Activated naive CD4-positive, alpha-beta T cell treated with anti-CD3 and anti-CD28 coated beads for 36 hours (primary cell): ENCODE measurements at regions of chr3 and their contacts with region 1.

Region 1: GRCh38 chr3:66822186-66823008 is 175.7 kb upstream of the KBTBD8 start:
- DNase-seq: peak; percentile 81
- H3K4me3 Mint-ChIP-seq: no peak overlapping the region
- H3K27ac Mint-ChIP-seq: no peak overlapping the region
- H3K4me1 Mint-ChIP-seq: no peaks in the 10 kb centered on the region
- H3K27me3 Mint-ChIP-seq: no peaks in the 10 kb centered on the region

Region 2: DNA sequence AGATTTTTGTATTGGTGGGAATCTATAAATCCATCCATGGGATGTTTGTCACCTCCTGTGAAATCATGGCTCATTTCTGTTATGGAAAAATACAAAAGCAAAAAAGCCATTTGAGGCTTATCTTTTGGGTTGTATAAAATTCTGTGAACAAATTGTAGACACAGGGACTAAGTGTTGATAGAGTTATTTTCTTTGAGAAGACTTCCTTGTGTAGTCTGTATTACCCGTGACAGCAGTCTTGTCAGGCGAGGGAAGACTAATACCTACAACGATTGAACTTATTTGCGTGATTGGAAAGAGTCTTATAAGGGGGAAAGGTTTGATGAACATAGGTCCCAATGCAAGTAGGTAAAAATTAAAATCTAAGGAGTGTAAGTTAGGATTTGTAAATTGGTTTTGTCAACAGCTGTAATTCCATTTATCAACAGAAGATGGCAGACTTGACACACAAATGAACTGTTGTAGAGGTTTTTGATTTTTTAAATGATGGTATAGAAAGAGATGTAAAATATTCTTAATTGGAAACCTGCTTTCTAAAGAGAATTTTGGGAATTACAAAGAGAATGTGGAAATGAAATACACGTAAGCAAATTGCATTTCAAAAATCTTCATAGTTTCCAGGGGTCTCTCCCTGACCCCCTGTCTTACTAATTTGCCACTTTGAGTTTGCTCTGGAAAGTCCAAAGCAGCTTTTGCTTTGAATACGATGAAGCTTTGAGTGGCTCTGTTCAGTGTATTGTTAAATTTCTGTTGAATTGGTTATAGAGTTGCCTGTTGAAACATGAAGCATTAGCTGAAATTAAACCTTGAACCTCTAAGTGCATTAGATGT is 568.4 kb before region 1 on chr3:
- CTCF ChIA-PET with region 1: interaction called, 14 read pairs
- intact Hi-C with region 1: loop called (anchors 1 kb)
- DNase-seq: no peak
- H3K4me3 Mint-ChIP-seq: no peak overlapping the region
- H3K27ac Mint-ChIP-seq: no peak overlapping the region
- H3K4me1 Mint-ChIP-seq: no peaks in the 10 kb centered on the region
- H3K27me3 Mint-ChIP-seq: no peaks in the 10 kb centered on the region

Region 3: GRCh38 chr3:66803206-66803605 is 19.2 kb before region 1 on chr3:
- CTCF ChIA-PET with region 1: interaction called, 16 read pairs
- intact Hi-C with region 1: no loop called
- DNase-seq: no peak
- H3K4me3 Mint-ChIP-seq: no peak overlapping the region
- H3K27ac Mint-ChIP-seq: no peak overlapping the region
- H3K4me1 Mint-ChIP-seq: no peaks in the 10 kb centered on the region
- H3K27me3 Mint-ChIP-seq: peaks cover 14% of the 10 kb centered on the region

Region 4: DNA sequence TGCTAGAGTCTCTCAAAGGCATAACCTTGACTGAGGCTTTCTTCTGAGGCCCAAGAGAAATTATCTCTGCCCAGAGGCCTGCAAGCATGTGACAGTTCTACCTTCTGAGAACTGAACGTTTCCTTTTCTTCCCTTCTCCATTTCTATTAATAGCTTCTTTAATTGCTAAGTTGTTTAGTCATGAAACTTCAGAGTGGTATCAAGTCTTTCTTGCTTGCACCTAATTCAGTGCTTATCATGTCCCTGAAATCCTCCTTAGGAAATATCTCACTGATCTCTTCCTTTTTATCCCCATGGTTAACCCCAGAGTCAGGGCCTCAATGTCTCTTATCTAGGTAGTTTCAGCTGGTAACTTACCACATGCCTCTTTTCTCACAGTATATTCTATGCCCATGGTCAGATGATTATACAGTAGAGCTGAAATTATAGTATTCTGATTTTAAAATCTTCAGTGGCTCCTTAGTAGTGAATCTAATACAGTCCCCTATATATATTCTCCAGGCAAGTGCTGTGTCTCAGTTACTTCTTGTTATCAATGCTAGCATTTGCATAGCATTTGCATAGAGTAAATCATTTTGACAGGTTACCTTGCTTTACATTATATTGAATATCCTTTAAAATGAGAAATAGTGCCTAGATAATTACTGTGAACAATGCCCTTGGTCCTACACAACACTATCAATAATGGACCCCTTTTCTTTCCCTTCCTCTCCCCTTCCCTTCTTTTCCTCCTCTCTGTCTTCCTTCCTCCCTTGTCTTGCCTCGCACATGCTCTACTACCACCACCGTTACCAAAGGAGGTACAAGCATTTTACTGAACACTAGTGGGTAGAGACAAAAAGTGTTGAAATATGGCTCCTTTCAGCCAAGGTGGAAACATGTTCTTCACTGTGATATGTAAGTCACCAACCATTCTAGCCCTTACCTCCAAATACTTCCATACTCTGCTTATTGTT is 208.7 kb after region 1 on chr3:
- CTCF ChIA-PET with region 1: no interaction called
- intact Hi-C with region 1: no loop called
- DNase-seq: no peak
- H3K4me3 Mint-ChIP-seq: no peak overlapping the region
- H3K27ac Mint-ChIP-seq: no peak overlapping the region
- H3K4me1 Mint-ChIP-seq: peaks cover 4% of the 10 kb centered on the region
- H3K27me3 Mint-ChIP-seq: no peaks in the 10 kb centered on the region